ENCODE measurements at regions of chr14 and their contacts with region 1.

Region 1: DNA sequence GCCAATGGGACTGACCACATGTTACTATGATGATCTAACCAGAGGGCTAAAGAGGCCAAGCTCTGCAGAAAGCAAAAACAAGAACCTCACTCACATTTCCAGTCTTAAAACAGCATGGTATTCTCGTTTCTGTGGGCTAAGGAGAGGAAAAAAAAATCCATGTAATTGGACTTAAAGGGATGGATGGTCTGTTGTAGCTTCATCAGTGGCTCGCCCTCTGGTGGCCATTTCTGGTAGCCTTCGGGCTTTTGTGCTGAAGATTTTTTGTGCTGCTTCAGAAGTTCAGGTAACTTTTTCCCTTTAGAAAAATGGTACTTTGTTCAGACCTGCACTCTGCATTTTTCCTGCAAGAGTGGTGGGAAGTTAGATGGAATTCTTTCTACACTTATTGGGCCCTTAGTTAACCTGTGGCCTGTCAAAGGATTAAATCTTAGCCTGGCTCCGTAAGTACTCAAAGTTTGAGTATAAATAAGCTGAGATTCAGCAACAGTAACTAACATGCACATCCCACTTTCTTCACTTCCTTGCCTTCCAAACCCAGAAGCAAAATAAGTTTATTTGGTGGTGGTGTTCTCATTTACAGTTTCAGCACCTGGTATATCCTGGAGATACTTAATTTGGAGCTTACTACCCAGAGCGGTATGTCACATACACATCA is 22.3 kb downstream of the DCAF4 start:
- DNase-seq: no peak
- H3K4me3 ChIP-seq: no peak overlapping the region
- H3K27ac ChIP-seq: no peak overlapping the region
- H3K4me1 ChIP-seq: no peaks in the 10 kb centered on the region
- H3K27me3 ChIP-seq: no peaks in the 10 kb centered on the region
- CTCF ChIP-seq: peak; percentile 27 to 89 (median 70)
- EP300 ChIP-seq: no peak
- POLR2A ChIP-seq: no peak

Region 2: GRCh38 chr14:72516936-72517700 is 431.5 kb before region 1 on chr14:
- intact Hi-C with region 1: loop called (anchors 2 kb)
- DNase-seq: no peak
- H3K4me3 ChIP-seq: no peak overlapping the region
- H3K27ac ChIP-seq: no peak overlapping the region
- H3K4me1 ChIP-seq: peaks cover 0 to 3% (median 0%) of the 10 kb centered on the region in 4 donors
- H3K27me3 ChIP-seq: no peaks in the 10 kb centered on the region
- CTCF ChIP-seq: peak; percentile 71 to 92 (median 82)
- EP300 ChIP-seq: no peak
- POLR2A ChIP-seq: no peak

Region 3: DNA sequence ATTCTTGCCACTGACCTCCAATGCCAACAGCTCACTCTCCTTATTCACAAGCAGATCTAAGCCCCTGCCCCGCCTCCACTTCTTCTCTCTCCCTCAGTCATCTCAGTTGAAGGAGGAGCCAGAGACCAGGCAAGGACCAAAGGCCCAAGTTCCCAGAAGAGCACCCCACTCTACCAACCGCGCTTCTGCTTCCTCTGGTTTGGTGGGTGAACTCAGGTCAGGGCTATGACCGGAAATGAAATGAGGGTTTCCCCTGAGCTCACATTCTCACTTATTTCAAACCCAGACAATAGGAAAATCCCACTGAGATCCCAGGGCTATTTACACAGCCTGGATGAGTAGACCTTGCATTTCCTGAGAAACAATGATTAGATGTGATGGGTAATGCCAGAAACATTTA is 64.6 kb before region 1 on chr14:
- intact Hi-C with region 1: no loop called
- DNase-seq: no peak
- H3K4me3 ChIP-seq: no peak overlapping the region
- H3K27ac ChIP-seq: no peak overlapping the region
- H3K4me1 ChIP-seq: no peaks in the 10 kb centered on the region
- H3K27me3 ChIP-seq: peaks cover 0 to 4% (median 0%) of the 10 kb centered on the region in 3 donors
- CTCF ChIP-seq: no peak
- EP300 ChIP-seq: no peak
- POLR2A ChIP-seq: no peak

Measured in sigmoid colon (tissue), 7 donors.